ENCODE measurements at regions of chr15 and their contacts with region 1.

Region 1: DNA sequence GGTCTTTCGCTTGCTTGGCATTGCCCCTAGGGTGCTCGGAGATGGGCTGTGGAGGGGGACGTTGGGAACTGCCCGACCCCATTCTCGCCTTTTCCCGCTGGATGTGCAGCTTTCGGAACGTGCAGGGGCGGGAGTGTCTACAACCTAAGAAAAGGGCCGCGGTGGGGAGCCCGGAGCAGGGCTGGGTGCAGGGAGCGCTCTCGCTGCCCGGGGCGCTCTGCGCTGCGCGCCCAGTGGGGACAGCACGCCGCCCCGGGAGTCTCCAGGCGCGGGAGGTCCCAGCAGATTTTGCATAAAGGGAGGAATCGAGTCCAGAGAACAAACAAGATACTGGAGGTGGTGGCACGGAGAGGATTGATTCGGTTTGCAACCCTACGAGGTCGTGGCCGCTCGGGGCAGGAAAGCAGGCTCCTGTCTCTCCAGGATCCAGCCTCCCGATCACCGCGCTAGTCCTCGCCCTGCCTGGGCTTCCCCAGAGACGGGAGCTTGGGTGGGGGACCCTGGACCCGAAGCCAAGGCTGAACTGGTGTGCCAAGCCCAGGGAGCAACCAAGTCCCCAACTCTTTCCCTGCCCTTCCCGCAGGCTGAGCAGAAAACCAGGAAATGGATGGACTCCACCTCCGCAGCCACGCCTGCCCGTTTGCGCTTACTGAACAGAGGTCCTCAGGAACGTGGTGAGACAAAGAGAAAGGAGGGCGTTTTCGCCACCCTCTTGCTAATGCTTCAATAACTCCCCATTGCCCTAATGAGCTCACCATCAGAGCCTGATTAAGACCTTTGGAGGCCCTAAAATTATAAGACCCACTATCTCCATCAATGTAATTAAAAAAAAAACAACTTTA is 59.7 kb downstream of the NOX5 start:
- DNase-seq: peak; percentile 18
- ATAC-seq: peak; percentile 97
- H3K4me3 ChIP-seq: peak overlapping the region; percentile 56 to 77
- H3K27ac ChIP-seq: peak overlapping the region; percentile 9
- H3K4me1 ChIP-seq: no peaks in the 10 kb centered on the region
- H3K27me3 ChIP-seq: peaks cover 5% of the 10 kb centered on the region; the same call in 1 of the 2 replicates
- CTCF ChIP-seq: peak; percentile 12; the same call in 1 of the 2 replicates

Region 2: GRCh38 chr15:69104050-69104750 is 30.0 kb after region 1 on chr15:
- CTCF ChIA-PET with region 1: no interaction called
- POLR2A ChIA-PET with region 1: interaction called, 14 read pairs
- in situ Hi-C with region 1: no loop called
- intact Hi-C with region 1: no loop called
- DNase-seq: no peak
- ATAC-seq: no peak
- H3K4me3 ChIP-seq: no peak overlapping the region
- H3K27ac ChIP-seq: no peak overlapping the region
- H3K4me1 ChIP-seq: no peaks in the 10 kb centered on the region
- H3K27me3 ChIP-seq: peaks cover 11% of the 10 kb centered on the region
- CTCF ChIP-seq: no peak

Region 3: DNA sequence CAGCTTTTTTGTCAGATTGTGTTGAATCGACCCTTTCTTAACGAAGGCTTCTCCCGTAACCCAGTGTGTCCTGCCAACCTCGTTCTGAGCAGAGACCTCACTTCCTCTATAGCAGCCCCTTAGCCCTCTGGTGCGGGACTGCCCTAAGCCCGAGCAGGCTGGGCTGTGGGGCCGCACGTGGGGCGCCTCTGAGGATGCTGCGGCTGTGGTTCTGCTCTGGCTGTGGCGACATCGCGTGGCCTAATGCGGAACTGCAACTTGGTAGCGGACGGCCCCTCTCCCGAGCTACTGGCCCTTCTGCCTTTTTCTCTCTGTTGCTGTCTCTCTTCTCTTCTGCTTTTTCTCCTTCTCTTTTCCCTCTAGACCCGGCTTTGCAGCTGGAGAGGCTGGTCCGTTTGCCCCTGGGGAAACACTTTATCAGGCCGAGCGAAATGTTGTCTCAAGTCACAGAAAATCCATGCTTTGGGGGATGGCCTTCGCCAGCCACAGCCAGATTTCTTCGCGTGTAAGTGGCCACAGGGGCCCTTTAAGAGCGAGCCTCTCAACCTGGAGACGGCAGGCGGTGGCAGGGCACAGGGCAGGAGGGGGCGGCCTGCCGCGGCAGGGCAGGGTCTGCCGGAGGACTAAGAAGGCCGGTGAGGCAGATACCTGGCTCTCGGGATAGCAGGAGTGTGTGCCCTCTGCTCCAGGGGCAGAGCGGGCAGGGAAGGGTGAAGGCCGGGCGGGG is 320.5 kb after region 1 on chr15:
- CTCF ChIA-PET with region 1: no interaction called
- POLR2A ChIA-PET with region 1: no interaction called
- in situ Hi-C with region 1: no loop called
- intact Hi-C with region 1: loop called (anchors 5 kb)
- DNase-seq: peak; percentile 51
- ATAC-seq: peak; percentile 92
- H3K4me3 ChIP-seq: peak overlapping the region in 1 of 2 experiments; percentile 23; a peak in 1 of 4 replicates
- H3K27ac ChIP-seq: no peak overlapping the region
- H3K4me1 ChIP-seq: peaks cover 3% of the 10 kb centered on the region; the same call in 1 of the 2 replicates
- H3K27me3 ChIP-seq: no peaks in the 10 kb centered on the region
- CTCF ChIP-seq: peak; percentile 97

Region 4: GRCh38 chr15:69853581-69853980 is 779.4 kb after region 1 on chr15:
- CTCF ChIA-PET with region 1: no interaction called
- POLR2A ChIA-PET with region 1: no interaction called
- in situ Hi-C with region 1: no loop called
- intact Hi-C with region 1: no loop called
- DNase-seq: peak; percentile 58
- ATAC-seq: peak; percentile 91
- H3K4me3 ChIP-seq: no peak overlapping the region
- H3K27ac ChIP-seq: no peak overlapping the region
- H3K4me1 ChIP-seq: peaks cover 7% of the 10 kb centered on the region; the same call in 1 of the 2 replicates
- H3K27me3 ChIP-seq: no peaks in the 10 kb centered on the region
- CTCF ChIP-seq: no peak